ENCODE measurements at regions of chr1 and their contacts with region 1.

Region 1: DNA sequence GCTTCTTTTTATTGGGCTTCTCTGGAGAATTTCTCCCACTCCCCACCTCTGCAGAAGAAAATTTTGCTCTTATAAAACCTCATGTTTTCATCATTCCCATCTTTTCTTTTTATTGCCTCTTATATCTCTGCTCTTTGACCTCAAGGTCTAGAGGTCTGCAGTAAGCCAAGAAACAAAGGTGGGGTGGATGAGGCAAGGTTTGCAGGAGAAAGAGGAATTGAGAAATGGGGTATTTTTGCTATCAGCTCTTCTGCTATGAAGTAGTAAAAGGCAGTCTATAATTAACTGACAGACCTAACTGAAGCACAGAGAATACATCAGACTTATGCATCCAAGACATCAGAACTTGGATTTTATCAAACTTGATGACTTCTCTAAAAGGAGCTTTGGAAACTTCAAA is 22.9 kb downstream of the SYT11 start:
- DNase-seq: no peak
- H3K4me3 ChIP-seq: no peak overlapping the region
- H3K27ac ChIP-seq: no peak overlapping the region
- H3K4me1 ChIP-seq: 0 out of 7 replicates have a peak, but pooled peaks cover 0 to 3% (median 0%) of the 10 kb centered on the region in 4 experiments
- H3K27me3 ChIP-seq: no peaks in the 10 kb centered on the region
- CTCF ChIP-seq: no peak
- EP300 ChIP-seq: no peak
- POLR2A ChIP-seq: no peak
- RAD21 ChIP-seq: no peak

Region 2: DNA sequence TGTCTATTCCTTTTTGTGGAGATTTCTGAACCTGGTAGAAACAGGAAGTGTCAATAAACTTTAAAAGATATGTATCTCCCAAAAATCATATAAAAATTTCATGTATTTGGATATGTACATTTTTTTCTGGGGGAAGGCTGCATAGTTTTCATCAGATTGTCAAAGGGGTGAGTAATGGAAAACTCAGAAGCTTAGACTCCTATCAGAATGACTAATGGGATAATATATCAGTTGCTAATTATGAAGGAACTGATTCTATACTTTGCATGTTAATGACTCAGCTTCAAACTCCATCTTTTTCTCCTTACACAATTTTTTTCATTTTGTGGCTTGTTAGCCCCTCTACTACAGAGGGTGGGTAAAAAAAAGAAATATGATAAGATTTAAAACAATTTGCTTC is 81.1 kb before region 1 on chr1:
- CTCF ChIA-PET with region 1: no interaction called
- POLR2A ChIA-PET with region 1: no interaction called
- DNase-seq: no peak
- H3K4me3 ChIP-seq: no peak overlapping the region
- H3K27ac ChIP-seq: no peak overlapping the region
- H3K4me1 ChIP-seq: no peaks in the 10 kb centered on the region
- H3K27me3 ChIP-seq: no peaks in the 10 kb centered on the region
- CTCF ChIP-seq: no peak
- EP300 ChIP-seq: no peak
- POLR2A ChIP-seq: no peak
- RAD21 ChIP-seq: no peak

Region 3: GRCh38 chr1:155893389-155894142 is 11.3 kb after region 1 on chr1:
- CTCF ChIA-PET with region 1: interaction called, 5 read pairs
- POLR2A ChIA-PET with region 1: interaction called, 10 read pairs
- DNase-seq: no peak
- H3K4me3 ChIP-seq: no peak overlapping the region
- H3K27ac ChIP-seq: no peak overlapping the region
- H3K4me1 ChIP-seq: no peaks in the 10 kb centered on the region
- H3K27me3 ChIP-seq: no peaks in the 10 kb centered on the region
- CTCF ChIP-seq: no peak
- EP300 ChIP-seq: no peak
- POLR2A ChIP-seq: no peak
- RAD21 ChIP-seq: no peak

Measured in H1 (cell line).